ENCODE measurements at regions of chr5 and their contacts with region 1.

Region 1: GRCh38 chr5:140401362-140402257 is at the start of gene ANKHD1:
- DNase-seq: peak; percentile 97
- H3K4me3 Mint-ChIP-seq: no peak within 1 kb of the TSS
- H3K27ac Mint-ChIP-seq: no peak within 1 kb of the TSS
- H3K4me1 Mint-ChIP-seq: peaks cover 20% of the 10 kb centered on the region
- H3K27me3 Mint-ChIP-seq: no peaks in the 10 kb centered on the region
- total RNA-seq, gene ANKHD1: 119 and 120 TPM in 2 replicates

Region 2: GRCh38 chr5:140107312-140108083 is 294.1 kb before region 1 on chr5:
- intact Hi-C with region 1: loop called (anchors 1 kb)
- DNase-seq: peak; percentile 90
- H3K4me3 Mint-ChIP-seq: peak overlapping the region; percentile 93
- H3K27ac Mint-ChIP-seq: peak overlapping the region; percentile 86
- H3K4me1 Mint-ChIP-seq: peaks cover 33% of the 10 kb centered on the region
- H3K27me3 Mint-ChIP-seq: peaks cover 59% of the 10 kb centered on the region

Region 3: DNA sequence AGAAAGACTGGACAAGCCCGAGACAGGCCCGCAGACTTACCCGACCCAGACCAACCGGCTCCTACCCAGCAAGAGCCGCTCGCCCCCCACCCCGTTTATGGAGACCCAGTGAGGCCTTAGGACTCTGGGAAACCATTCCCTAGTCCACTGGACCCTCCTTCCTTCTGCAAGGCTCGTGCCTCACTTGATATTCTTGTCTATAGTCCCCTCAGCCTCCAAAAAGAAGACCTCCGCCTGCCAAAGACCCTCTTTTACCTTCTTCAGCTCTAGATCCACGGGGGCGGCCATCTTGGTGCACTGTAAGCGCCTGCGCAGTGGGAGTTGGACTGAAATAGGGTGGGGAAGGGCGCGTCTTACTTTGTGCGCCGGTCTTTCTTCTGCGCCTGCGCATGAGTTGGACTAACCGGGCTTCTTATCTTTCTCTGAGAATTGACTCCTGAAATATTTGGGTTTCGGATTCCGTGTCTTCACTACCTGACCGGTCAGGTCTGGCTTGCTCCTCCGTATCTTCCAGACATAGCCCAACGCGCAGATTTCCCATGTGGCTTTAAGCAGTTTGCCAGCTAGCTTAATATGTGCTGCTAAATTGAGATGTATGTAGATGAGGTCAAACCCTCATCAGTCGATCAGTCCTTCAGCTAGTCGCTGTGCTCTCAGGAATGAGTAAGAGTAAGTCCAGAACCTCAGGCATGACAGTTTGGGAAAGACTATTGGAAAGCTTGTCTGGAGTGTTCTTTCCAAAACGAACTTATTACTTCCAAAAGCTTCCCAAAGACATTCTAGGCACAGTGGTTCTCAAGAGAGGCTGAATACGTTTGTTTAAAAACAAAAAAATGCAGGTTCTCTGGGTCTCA is 98.6 kb before region 1 on chr5 and contains the start of gene PFDN1:
- intact Hi-C with region 1: loop called (anchors 1 kb)
- DNase-seq: peak; percentile 91
- H3K4me3 Mint-ChIP-seq: peak within 1 kb of the TSS; percentile 100
- H3K27ac Mint-ChIP-seq: peak within 1 kb of the TSS; percentile 98
- H3K4me1 Mint-ChIP-seq: peaks cover 24% of the 10 kb centered on the region
- H3K27me3 Mint-ChIP-seq: peaks cover 11% of the 10 kb centered on the region
- total RNA-seq, gene PFDN1: 60.4 and 61.0 TPM in 2 replicates

Region 4: DNA sequence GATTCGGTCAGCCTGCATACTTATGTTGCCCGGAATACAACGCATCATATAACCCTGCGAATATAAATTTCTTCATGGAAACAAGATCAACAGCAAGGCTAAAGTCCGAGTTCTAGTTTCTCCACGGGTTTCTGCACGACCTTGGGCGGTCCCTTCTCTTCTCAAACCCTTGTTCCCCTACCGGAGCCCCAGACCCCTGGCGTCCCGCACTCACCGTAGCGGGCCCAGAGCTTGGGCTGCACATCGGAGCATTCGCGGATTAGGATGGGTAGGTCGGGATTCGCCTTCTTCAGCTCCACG is 245.4 kb after region 1 on chr5:
- intact Hi-C with region 1: loop called (anchors 2 kb)
- DNase-seq: no peak
- H3K4me3 Mint-ChIP-seq: peak overlapping the region; percentile 99
- H3K27ac Mint-ChIP-seq: peak overlapping the region; percentile 99
- H3K4me1 Mint-ChIP-seq: peaks cover 21% of the 10 kb centered on the region
- H3K27me3 Mint-ChIP-seq: no peaks in the 10 kb centered on the region

Region 5: DNA sequence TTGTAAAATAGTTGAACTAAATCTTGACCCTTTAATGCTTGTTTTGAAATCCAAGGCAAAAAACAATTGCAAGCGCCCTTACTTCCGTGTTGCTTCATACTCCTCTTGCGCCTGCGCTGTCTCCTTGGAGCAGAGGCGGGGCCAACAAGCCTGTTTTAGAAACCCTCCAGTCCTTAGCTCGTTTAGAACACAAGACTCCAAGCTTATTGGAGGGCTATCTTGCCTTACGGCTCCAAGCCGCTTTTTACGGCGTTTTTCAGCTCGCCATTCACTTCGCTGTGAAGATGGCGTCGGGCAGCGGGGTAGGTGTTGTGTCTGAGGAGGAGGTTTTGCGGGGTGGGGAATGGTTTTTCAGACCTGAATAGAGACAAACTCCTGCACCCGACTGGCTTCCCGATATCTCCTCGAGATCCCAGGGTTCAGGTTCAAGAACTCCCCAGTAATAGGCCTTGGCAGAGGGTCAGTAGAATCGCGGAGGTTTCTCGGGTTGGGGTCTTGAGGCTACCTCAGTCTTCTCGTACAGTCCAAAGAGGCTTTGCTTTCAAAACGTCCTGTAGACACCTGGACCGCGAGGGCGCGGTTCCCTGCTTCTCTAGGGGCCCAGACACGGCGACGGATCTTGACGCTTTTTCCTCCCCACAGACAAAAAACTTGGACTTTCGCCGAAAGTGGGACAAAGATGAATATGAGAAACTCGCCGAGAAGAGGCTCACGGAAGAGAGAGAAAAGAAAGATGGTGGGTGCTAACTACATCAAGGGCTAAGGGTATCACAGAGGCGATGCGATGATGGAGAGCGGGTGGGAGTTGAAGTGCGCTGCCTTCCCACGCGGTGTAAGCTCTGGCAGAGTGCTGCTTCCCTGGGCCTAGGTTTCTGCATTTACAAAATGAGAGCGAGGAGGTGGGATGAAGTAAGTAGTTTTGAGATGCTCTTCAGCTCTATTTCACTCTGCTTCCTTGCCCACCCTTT is 298.9 kb after region 1 on chr5 and contains the start of gene ZMAT2:
- intact Hi-C with region 1: loop called (anchors 2 kb)
- DNase-seq: peak; percentile 92
- H3K4me3 Mint-ChIP-seq: peak within 1 kb of the TSS; percentile 93
- H3K27ac Mint-ChIP-seq: peak within 1 kb of the TSS; percentile 81
- H3K4me1 Mint-ChIP-seq: peaks cover 15% of the 10 kb centered on the region
- H3K27me3 Mint-ChIP-seq: no peaks in the 10 kb centered on the region
- total RNA-seq, gene ZMAT2: 53.4 and 53.9 TPM in 2 replicates

Measured in activated T-helper 2 cell treated with anti-CD3 and anti-CD28 coated beads, Interferon-gamma antibody, Interleukin-2, Interleukin-4, amounts not matched to agents 10 μg/mL and 5 μg/mL and 100 μg/mL, durations not matched to agents 14 hours and 24 hours and 36 hours (primary cell).